Posterior vena cava (tissue), 2 donors: ENCODE measurements at regions of chr1 and their contacts with region 1.

Region 1: DNA sequence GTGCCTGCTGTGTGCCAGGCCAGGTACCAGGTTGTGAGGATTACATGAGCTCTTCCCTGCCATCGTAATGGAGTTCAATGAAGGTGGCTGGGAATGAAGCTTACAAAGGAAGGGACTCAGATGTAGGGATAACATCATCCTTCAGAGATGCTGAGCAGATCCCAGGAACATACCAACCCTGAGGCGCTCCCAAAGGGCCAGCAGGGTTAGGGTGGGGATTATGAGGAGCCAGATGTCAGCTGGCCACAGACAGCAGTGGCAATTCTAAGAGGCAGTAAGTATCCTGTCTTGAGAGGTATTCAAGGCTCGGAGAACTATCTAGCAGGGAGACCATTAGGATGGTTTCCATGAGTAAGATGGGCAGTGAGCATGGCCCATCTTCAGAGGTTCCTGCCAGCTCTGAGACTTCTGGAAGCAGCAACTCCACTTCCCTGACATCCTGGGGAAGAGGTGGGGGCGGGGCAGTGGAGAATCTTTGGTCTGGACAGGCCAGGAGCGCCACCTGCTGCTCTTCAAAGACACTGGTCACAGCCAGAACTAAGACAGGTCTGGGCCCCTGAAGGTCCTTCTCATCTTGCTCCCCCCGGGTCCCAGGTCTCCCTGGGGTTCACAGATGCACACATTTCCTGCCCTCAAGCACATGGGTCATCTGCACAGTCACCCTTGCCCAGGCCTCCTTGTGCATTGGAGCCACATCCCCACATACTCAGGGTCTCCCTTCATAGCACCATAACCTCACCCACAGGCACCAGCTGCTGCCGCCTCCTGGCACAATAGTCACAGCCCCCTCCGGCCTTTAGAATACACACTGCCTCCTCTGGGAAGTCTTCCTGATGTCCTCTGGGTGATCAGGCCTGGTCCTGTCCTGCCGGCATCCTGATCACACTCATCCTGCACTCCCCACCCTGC is 2.7 kb upstream of the SDC3 start:
- DNase-seq: peak; percentile 95

Region 2: DNA sequence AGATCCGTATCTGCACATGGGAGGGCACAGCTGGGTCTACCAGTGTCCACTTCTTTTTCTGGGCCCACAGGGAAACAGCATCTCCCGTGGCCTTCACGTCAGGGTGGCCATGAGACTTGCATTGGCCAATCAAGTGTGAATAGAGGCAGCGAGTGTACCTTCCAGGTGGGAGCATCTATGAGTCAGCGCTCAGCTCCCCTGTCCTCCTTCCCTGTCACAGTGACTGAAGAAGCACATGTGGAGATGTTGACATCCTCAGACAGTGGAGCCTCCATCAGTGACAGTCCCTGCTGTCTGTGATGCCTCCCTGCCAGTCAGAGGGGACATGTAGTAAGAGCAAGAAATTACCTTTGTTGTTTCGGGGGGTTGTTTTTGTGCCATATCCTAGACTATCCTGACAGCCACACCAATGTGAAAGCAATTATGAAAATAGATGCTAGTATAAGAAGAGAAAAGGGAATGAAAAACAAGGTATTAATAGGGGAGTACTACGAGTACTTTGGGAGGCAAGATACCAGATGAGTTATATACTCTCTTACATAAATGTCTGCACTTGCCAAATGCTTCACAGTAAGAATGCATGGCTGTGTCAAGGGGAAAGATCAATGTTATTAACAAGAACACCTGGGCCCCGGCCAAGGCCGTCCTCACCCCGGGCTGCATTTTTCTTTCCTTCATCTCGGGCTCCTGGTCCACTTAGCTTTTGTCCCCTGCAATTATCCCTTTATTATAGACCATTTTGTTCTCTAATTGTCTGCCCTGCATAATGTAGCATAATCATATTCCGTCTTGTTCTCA is 273.9 kb before region 1 on chr1:
- intact Hi-C with region 1: no loop called
- DNase-seq: peak; percentile 36

Region 3: DNA sequence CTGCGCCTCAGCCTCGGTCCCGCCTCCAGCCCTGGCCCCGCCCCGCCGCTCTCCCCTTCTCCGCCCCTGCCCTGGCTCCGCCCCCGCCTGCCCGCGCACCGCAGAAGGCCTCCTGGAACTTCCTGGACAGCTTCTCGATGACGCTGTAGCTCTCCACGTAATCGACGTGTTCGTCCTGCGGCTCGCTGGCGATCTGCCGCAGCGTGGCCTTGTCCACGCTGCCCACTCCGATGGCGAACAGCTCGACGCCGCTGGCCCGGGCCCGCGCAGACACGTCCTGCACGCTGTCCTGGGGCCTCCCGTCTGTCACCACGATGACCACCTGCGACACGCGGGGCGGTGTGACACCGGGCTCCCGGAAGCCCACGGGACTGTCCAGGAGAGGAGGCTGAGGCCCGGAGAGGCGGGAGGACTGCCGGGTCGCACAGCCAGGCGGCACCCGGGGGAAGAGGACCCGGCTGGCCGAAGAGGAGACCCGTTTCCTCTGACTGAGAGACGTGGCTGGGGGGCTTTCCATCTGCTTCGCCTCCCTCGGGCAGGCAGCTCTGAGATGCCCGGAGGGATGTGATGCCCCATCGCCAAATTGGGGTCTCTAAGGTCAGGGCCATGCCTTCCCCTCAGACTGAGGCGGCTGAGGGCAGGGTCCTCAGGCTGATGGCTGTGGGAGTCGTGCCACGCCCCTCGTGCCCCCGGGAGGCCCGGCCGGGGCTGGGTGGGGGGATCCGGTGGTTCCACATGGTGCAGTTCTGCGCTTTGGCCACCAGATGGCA is 192.5 kb before region 1 on chr1:
- intact Hi-C with region 1: loop called (anchors 5 kb)
- DNase-seq: peak; percentile 95

Region 4: DNA sequence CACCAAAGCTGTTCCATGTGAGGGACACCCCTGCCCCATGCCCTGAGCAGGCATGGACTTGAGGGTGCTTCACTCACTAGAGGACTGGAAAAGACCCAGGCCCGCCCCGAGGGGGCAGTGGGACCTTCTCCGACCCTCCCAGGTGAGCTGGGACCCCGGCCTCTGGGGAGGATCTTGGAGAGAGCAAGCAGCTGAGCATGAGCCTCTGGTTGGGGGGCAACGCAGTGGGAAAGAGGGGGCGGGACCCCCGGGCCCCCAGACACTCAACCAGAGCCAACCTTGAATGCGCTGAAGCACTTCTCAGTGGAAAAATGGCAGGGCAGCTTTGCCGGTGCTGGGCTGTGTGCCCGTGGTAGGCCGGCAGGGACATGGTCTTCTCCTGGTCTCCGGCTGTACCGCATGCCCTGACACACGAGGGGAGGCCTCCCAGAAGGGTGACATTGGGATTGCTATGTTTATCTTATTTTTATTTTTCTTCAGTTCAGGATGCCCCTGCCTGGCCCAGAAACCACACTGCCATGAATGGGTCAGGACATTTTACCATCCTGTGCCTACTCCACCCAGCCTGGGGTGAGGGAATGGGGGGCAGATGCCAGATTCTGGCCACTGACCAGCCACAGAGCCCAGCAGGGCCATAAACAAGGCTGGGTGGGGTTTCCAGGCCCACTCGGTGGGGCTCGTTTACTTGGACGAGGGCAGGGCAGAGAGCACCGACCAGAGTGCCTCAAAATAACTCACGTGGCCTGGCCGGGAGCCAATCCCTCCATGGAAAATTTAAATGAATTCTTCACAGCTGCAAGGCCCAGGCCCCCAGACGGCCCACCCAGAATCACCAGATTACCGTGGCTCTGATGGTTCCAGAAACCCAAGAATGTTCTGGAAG is 136.5 kb before region 1 on chr1:
- intact Hi-C with region 1: no loop called
- DNase-seq: peak; percentile 77

Region 5: GRCh38 chr1:30929135-30929889 is 18.0 kb after region 1 on chr1:
- intact Hi-C with region 1: no loop called
- DNase-seq: no peak

Region 6: GRCh38 chr1:31135973-31136600 is 224.8 kb after region 1 on chr1:
- intact Hi-C with region 1: no loop called
- DNase-seq: no peak